PC-3 (cell line): ENCODE measurements at regions of chr11 and their contacts with region 1.

Region 1: DNA sequence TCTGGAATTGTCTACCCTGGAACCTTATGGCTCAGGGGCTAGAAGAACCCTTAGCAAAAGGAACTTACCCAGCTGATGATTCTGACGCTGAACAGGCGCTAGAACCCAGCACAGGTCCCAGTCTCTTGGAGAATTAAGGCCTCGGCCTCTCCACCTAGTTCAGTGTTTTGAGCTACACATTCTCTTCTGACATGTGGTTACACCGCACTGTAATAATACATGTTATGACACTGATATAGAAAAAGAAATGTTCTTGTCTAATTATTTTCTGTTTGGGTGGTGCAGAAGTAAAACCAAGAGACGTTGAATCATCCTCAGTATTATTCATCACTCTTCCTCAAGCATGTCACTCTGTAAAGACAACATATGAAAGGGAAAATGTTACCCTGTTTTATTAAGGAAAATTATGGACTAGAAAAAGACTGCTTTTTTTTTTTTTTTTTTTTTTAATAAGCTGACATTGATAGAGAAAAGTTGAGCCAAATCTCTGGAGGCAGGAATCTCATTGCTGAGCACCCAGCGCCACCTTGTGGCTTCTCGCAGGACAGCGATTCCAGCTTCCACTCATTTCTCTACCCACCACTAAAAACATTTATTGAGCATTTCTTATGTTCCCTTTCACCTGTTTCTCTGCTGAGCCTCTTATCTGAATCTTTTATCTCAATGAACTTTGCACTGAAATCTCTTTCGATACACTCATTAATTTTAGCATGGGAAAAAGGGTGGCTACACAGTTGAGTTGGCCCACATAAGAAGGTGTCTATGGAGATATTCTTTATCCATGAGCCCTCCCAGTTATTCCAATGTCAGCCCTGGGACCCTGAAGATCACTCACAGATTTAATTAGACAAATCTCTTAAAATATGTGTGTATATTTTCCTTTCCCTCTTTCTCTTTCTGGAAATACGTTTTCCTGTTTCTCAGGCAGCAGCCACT is 12.6 kb upstream of the APLNR start:
- DNase-seq: peak; percentile 83
- ATAC-seq: peak; percentile 73
- H3K4me3 ChIP-seq: no peak overlapping the region
- H3K27ac ChIP-seq: no peak overlapping the region
- H3K4me1 ChIP-seq: no peaks in the 10 kb centered on the region
- H3K27me3 ChIP-seq: peaks cover 44% of the 10 kb centered on the region
- CTCF ChIP-seq: peak; percentile 92

Region 2: GRCh38 chr11:56841210-56841810 is 408.3 kb before region 1 on chr11:
- CTCF ChIA-PET with region 1: interaction called, 68 read pairs
- POLR2A ChIA-PET with region 1: no interaction called
- intact Hi-C with region 1: loop called (anchors 1 kb)
- DNase-seq: peak; percentile 82
- ATAC-seq: peak; percentile 65
- H3K4me3 ChIP-seq: no peak overlapping the region
- H3K27ac ChIP-seq: no peak overlapping the region
- H3K4me1 ChIP-seq: no peaks in the 10 kb centered on the region
- H3K27me3 ChIP-seq: peaks cover 33% of the 10 kb centered on the region
- CTCF ChIP-seq: peak; percentile 92

Region 3: DNA sequence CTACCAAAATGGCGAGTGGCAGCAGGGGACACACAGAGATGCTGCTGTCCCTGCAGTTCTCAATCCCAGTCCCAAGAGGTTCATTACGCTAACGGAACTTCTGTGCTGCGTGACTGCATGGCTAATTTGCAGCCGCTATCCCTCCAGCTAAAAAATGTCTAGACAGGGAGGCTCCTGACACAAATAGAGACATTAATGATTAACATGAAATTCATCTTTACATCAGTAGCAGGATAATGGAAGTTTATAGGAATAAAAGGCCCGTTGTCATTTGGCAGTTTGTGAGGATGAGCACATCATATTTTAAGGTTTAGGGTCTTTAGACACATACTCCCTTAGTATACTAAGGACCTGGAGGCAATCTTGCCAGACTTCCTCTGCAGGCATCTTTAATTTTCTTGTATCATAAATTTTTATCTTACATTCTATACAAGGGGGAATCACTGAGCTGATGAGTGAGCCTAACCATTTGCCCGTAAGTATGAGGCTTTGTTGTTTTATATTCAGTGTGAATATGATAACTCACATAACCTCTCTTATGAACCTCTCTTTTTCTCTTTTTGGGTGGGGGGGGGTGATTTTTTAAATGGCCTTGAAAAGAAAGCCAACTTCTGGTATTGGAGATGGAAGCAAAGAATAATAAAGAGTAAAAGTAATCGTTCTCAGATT is 401.4 kb before region 1 on chr11:
- CTCF ChIA-PET with region 1: interaction called, 10 read pairs
- POLR2A ChIA-PET with region 1: no interaction called
- intact Hi-C with region 1: no loop called
- DNase-seq: no peak
- ATAC-seq: no peak
- H3K4me3 ChIP-seq: no peak overlapping the region
- H3K27ac ChIP-seq: no peak overlapping the region
- H3K4me1 ChIP-seq: no peaks in the 10 kb centered on the region
- H3K27me3 ChIP-seq: peaks cover 56% of the 10 kb centered on the region
- CTCF ChIP-seq: no peak

Region 4: GRCh38 chr11:57116654-57117053 is 133.0 kb before region 1 on chr11:
- CTCF ChIA-PET with region 1: interaction called, 9 read pairs
- POLR2A ChIA-PET with region 1: no interaction called
- intact Hi-C with region 1: loop called (anchors 1 kb)
- DNase-seq: peak; percentile 69
- ATAC-seq: peak; percentile 83
- H3K4me3 ChIP-seq: no peak overlapping the region
- H3K27ac ChIP-seq: no peak overlapping the region
- H3K4me1 ChIP-seq: no peaks in the 10 kb centered on the region
- H3K27me3 ChIP-seq: peaks cover 20% of the 10 kb centered on the region
- CTCF ChIP-seq: peak; percentile 83

Region 5: GRCh38 chr11:57131080-57131790 is 118.4 kb before region 1 on chr11:
- CTCF ChIA-PET with region 1: interaction called, 4 read pairs
- POLR2A ChIA-PET with region 1: no interaction called
- intact Hi-C with region 1: loop called (anchors 1 kb)
- DNase-seq: peak; percentile 65
- ATAC-seq: peak; percentile 63; the same call in 1 of the 2 replicates
- H3K4me3 ChIP-seq: no peak overlapping the region
- H3K27ac ChIP-seq: no peak overlapping the region
- H3K4me1 ChIP-seq: peaks cover 10% of the 10 kb centered on the region; the same call in 1 of the 2 replicates
- H3K27me3 ChIP-seq: peaks cover 67% of the 10 kb centered on the region
- CTCF ChIP-seq: peak; percentile 77